ENCODE measurements at regions of chr3 and their contacts with region 1.

Region 1: GRCh38 chr3:40340541-40341170 is 31.1 kb downstream of the EIF1B start:
- DNase-seq: no peak
- H3K4me3 ChIP-seq: no peak overlapping the region
- H3K27me3 ChIP-seq: no peaks in the 10 kb centered on the region
- CTCF ChIP-seq: no peak

Region 2: DNA sequence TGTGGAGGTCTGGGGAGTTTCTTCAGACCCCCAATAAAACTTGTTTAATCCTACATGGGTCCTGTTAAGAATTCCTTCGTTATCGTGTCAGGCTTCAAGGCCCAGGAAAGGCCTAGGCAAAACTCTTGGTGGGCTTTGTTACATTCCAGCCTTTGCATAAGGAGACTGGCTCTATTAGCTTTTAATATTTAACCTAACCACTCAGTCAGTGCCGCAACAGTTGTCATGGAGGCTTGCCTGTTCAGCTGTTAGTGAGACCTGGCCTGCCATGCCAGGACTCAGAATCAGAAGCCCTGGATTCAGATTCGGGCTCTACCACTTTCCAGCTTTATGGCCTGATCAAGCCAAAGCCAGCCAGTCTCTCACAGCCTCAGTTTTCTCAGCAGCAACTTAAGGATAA is 11.6 kb before region 1 on chr3:
- CTCF ChIA-PET with region 1: interaction called, 13 read pairs
- POLR2A ChIA-PET with region 1: no interaction called
- DNase-seq: no peak
- H3K4me3 ChIP-seq: no peak overlapping the region
- H3K27me3 ChIP-seq: no peaks in the 10 kb centered on the region
- CTCF ChIP-seq: no peak

Measured in BJ (cell line).